ENCODE measurements at regions of chr1 and their contacts with region 1.

Region 1: GRCh38 chr1:43358746-43359693 is at the start of gene CDC20:
- DNase-seq: peak; percentile 100
- H3K4me3 Mint-ChIP-seq: peak within 1 kb of the TSS; percentile 94
- H3K27ac Mint-ChIP-seq: peak within 1 kb of the TSS; percentile 85
- H3K4me1 Mint-ChIP-seq: peaks cover 32% of the 10 kb centered on the region
- H3K27me3 Mint-ChIP-seq: no peaks in the 10 kb centered on the region
- total RNA-seq, gene CDC20: 179 to 194 TPM

Region 2: GRCh38 chr1:43171876-43172526 is 187.0 kb before region 1 on chr1 and contains the starts of genes CFAP57 and EBNA1BP2:
- CTCF ChIA-PET with region 1: no interaction called
- intact Hi-C with region 1: loop called (anchors 2 kb)
- DNase-seq: peak; percentile 96
- H3K4me3 Mint-ChIP-seq: peak within 1 kb of the TSS; percentile 99
- H3K27ac Mint-ChIP-seq: peak within 1 kb of the TSS; percentile 90
- H3K4me1 Mint-ChIP-seq: peaks cover 39% of the 10 kb centered on the region
- H3K27me3 Mint-ChIP-seq: peaks cover 2% of the 10 kb centered on the region
- total RNA-seq, gene CFAP57: 0.12 to 0.14 TPM
- total RNA-seq, gene EBNA1BP2: 88.0 to 88.3 TPM

Region 3: DNA sequence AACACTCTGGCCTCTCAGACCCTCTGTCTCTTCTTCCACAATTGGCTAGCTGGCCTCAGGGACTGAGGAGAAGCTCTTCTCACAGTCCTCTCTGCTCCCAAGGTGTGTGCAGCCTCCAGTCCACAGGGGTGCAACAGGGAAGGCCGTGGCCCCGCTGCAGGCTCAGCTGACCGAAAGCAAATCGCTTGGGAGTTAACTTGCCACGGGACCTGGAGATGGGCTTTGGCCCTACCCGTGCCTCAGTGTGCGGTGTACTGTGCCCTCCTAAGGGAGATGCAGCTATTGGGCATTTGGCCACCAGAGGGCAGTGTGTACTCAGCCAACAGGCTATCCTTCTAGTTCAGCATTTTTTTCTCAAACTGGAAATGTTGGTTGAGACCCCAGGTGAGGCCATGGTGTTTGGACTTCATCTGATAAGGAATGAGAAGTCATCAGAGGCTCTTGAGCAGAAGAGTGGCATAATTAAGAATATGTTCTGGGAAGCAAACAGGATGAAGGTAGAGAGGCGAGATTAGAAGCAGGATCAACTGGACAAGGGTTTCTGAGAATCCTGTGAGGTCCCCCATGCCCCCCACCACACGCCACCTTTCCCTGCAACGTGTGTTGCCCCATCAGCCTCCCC is 131.8 kb before region 1 on chr1:
- CTCF ChIA-PET with region 1: interaction called, 4 read pairs
- intact Hi-C with region 1: loop called (anchors 1 kb)
- DNase-seq: peak; percentile 93
- H3K4me3 Mint-ChIP-seq: no peak overlapping the region
- H3K27ac Mint-ChIP-seq: no peak overlapping the region
- H3K4me1 Mint-ChIP-seq: no peaks in the 10 kb centered on the region
- H3K27me3 Mint-ChIP-seq: peaks cover 2% of the 10 kb centered on the region

Region 4: DNA sequence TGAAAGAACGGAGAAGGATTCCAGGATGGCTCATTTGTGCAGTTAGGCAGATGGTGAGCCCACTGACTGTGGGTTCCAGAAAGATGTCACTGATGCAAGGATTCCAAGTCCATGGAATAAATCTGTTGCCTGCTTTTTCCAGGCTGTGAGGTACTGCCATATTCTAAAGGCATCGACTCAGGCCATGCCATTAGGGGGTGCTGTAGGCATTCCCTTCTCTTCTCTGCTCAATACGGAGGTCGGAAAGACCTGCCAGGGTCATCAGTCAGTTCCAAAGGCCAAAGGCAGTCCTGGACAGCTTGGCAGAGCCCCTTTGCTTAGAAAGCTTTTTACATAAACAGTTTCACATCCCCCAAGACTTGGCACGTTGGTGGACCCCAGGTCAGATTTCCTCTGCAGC is 120.9 kb before region 1 on chr1:
- CTCF ChIA-PET with region 1: no interaction called
- intact Hi-C with region 1: loop called (anchors 1 kb)
- DNase-seq: peak; percentile 62
- H3K4me3 Mint-ChIP-seq: no peak overlapping the region
- H3K27ac Mint-ChIP-seq: no peak overlapping the region
- H3K4me1 Mint-ChIP-seq: no peaks in the 10 kb centered on the region
- H3K27me3 Mint-ChIP-seq: peaks cover 2% of the 10 kb centered on the region

Region 5: DNA sequence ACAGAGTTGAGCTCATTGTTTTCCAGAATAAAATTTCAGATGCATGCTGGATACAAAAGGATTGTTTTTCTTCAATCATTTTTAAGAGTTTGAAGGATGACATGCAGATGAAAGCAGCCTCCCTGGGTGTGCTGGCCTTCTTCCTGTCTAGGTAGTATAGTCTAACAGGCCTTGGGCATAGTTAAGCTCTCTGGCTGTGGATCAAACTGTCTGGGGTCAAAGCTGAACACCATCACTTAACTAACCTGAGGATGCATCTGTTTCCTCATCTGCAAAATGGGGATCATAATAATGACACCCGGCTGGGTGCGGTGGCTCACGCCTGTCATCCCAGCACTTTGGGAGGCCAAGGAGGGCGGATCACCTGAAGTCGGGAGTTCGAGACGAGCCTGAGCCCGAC is 64.3 kb before region 1 on chr1:
- CTCF ChIA-PET with region 1: no interaction called
- intact Hi-C with region 1: loop called (anchors 1 kb)
- DNase-seq: no peak
- H3K4me3 Mint-ChIP-seq: no peak overlapping the region
- H3K27ac Mint-ChIP-seq: no peak overlapping the region
- H3K4me1 Mint-ChIP-seq: peaks cover 16% of the 10 kb centered on the region
- H3K27me3 Mint-ChIP-seq: no peaks in the 10 kb centered on the region

Region 6: DNA sequence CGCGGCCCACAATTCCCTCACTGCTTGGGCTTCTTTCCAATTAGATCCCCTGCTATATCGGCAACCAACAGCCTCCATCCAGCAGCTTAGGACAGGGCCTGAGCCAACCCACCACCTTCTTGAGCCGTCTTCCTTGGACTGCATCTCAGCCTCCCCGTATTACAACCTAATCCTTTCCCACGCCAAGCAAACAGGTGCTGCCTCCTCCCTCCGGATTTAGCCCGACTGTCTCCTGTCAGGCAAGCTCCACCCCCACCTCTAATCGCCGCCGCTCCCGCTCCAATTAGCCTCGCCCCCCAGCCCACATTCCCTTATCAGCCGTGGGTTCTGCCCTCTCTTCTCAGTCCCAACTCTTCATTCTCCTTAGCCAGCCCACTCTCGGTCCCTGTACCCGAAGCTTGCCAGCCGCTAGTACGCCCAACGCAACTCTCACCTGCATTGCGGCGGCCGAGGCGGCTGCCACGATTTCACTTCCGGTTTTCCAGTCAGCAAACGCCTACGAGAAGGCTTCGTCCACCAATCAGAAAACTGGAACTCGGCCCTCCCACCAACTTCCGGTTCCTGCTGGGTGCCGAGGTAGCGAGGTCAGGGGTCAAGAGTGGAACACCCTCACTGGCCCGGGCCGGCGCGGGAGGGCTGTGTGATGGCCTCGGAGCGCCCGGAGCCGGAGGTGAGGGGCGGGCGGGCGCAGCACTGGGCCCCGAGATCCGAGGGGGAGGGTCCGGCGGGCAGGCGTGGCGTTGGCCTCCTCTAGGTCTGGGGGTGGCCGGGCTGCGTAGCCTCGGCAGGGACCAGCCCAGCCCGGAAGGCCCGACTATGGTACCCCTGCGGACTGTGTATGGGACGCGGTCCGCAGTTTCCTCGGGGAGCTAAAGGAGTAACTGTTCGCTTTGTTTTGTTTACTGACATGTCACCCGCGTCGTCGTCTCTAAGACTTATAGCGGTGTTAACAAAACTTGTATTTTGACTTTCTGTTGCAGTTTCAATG is 30.6 kb after region 1 on chr1 and contains the starts of genes MED8 and SZT2:
- CTCF ChIA-PET with region 1: no interaction called
- intact Hi-C with region 1: loop called (anchors 1 kb)
- DNase-seq: peak; percentile 96
- H3K4me3 Mint-ChIP-seq: peak within 1 kb of the TSS; percentile 95
- H3K27ac Mint-ChIP-seq: peak within 1 kb of the TSS; percentile 94
- H3K4me1 Mint-ChIP-seq: peaks cover 40% of the 10 kb centered on the region
- H3K27me3 Mint-ChIP-seq: no peaks in the 10 kb centered on the region
- total RNA-seq, gene MED8: 45.8 to 45.9 TPM
- total RNA-seq, gene SZT2: 26.6 to 28.2 TPM

Region 7: GRCh38 chr1:43454266-43455011 is 95.4 kb after region 1 on chr1:
- CTCF ChIA-PET with region 1: no interaction called
- intact Hi-C with region 1: loop called (anchors 2 kb)
- DNase-seq: peak; percentile 77
- H3K4me3 Mint-ChIP-seq: peak overlapping the region; percentile 83
- H3K27ac Mint-ChIP-seq: peak overlapping the region; percentile 81
- H3K4me1 Mint-ChIP-seq: peaks cover 13% of the 10 kb centered on the region
- H3K27me3 Mint-ChIP-seq: peaks cover 13% of the 10 kb centered on the region

Measured in activated naive CD4-positive, alpha-beta T cell treated with anti-CD3 and anti-CD28 coated beads for 36 hours (primary cell).